ENCODE measurements at regions of chr7 and their contacts with region 1.

Region 1: DNA sequence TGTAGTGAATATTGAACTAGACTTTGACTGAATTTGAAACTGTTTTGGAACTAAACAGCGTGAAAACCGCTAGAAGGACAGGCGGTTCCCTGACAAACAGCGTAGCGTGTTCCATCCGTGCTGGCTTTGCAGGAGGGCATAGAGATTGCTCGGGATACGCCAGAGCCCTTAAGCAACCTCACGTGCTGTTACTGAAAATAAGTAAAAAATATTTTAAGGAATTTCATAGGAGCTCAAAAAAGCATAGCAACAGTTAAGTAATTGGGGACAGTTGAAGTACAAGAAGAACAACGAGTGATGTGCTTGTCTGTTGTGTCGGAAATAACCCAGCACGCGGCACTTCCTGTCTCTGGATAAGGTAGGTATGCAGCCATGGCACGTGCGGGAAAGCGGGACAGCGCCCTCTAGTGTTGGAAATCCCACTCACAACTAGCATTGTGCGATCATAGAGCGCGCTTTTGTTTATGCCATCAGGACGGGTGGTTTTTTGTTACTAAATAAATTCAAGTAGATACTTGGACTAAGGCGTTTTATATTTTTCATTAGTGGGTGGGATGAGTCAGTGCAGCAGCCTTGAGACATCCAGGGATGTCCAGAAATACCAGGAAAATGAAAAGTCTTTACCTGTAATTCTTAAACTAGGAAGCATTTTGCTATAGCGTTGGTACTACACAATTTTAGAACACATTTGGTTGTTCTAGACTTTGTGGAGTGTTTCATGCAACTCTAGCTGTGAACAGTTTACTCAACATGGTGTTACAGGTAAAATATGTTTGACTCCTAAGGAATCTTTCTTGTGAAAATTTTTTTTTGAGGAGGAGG is 50.4 kb downstream of the DNAJB6 start:
- DNase-seq: peak; percentile 98
- H3K4me3 ChIP-seq: no peak overlapping the region
- H3K27ac ChIP-seq: peak overlapping the region; percentile 50 to 71 (median 58)
- H3K4me1 ChIP-seq: peaks cover 12 to 35% (median 31%) of the 10 kb centered on the region in 4 donors
- H3K27me3 ChIP-seq: no peaks in the 10 kb centered on the region
- CTCF ChIP-seq: peak; percentile 84 to 92 (median 88)
- EP300 ChIP-seq: peak; percentile 56
- POLR2A ChIP-seq: no peak

Region 2: DNA sequence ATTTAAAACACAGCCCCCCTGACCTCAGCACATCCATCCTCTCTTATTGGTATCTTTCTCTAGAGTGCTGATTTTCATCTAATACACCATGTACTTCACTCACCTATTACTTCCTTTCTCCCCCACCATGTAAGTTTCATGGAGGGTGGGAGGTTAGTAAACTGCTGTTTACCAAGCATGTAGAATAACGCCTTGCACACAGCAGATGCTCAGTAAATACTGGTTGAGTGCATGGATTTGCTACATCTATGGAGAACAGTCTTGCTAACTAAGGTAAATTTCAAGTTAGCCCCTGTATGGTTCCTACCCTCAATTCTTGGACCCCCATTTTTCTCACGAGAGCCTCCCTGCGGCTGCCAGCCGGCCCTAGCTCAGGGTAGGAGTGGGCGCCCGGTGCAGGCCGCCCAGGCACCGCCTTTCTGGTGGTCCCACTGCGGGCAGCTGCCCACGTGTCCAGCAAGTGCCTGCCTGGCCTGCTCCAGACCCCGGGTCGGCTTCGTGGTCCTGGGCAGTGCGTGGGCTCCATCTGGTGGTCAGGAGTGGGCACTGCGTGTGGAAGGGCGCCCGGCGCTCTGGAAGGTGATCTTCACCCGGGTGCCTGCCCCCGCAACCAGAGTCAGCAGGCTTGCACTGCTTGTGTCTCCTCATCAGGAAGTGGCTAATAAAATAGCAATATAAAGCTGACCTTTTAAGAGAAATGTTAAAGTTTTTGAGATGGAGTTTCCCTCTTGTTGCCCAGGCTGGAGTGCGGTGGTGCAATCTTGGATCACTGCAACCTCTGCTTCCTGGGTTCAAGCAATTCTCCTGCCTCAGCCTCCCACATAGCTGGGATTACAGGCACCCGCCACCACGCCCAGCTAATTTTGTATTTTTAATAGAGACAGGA is 113.7 kb before region 1 on chr7:
- intact Hi-C with region 1: loop called (anchors 5 kb)
- DNase-seq: no peak
- H3K4me3 ChIP-seq: no peak overlapping the region
- H3K27ac ChIP-seq: peak overlapping the region; percentile 70 to 85 (median 79)
- H3K4me1 ChIP-seq: peaks cover 18 to 41% (median 31%) of the 10 kb centered on the region in 4 donors
- H3K27me3 ChIP-seq: peaks cover 0 to 13% (median 0%) of the 10 kb centered on the region in 4 donors
- CTCF ChIP-seq: peak; percentile 97 to 100 (median 97)
- EP300 ChIP-seq: no peak
- POLR2A ChIP-seq: no peak

Region 3: GRCh38 chr7:157309990-157310668 is 77.1 kb before region 1 on chr7:
- intact Hi-C with region 1: no loop called
- DNase-seq: no peak
- H3K4me3 ChIP-seq: no peak overlapping the region
- H3K27ac ChIP-seq: peak overlapping the region in 1 of 4 donors; percentile 12
- H3K4me1 ChIP-seq: peaks cover 0 to 8% (median 4%) of the 10 kb centered on the region in 4 donors
- H3K27me3 ChIP-seq: peaks cover 0 to 4% (median 0%) of the 10 kb centered on the region in 4 donors
- CTCF ChIP-seq: no peak
- EP300 ChIP-seq: no peak
- POLR2A ChIP-seq: no peak

Region 4: GRCh38 chr7:157336383-157337315 is 50.5 kb before region 1 on chr7 and contains the start of gene DNAJB6:
- intact Hi-C with region 1: loop called (anchors 5 kb)
- DNase-seq: peak; percentile 99
- H3K4me3 ChIP-seq: peak within 1 kb of the TSS; percentile 82 to 93 (median 88)
- H3K27ac ChIP-seq: peak within 1 kb of the TSS; percentile 97 to 99 (median 98)
- H3K4me1 ChIP-seq: peaks cover 27 to 51% (median 45%) of the 10 kb centered on the region in 4 donors
- H3K27me3 ChIP-seq: no peaks in the 10 kb centered on the region
- CTCF ChIP-seq: no peak
- EP300 ChIP-seq: no peak
- POLR2A ChIP-seq: peak; percentile 93
- total RNA-seq, gene DNAJB6: 103 to 151 (median 139) TPM

Region 5: GRCh38 chr7:157568770-157569584 is 181.8 kb after region 1 on chr7:
- intact Hi-C with region 1: no loop called
- DNase-seq: no peak
- H3K4me3 ChIP-seq: peak overlapping the region; percentile 56 to 66 (median 62)
- H3K27ac ChIP-seq: peak overlapping the region; percentile 29 to 59 (median 38)
- H3K4me1 ChIP-seq: peaks cover 3 to 20% (median 18%) of the 10 kb centered on the region in 4 donors
- H3K27me3 ChIP-seq: no peaks in the 10 kb centered on the region
- CTCF ChIP-seq: no peak
- EP300 ChIP-seq: no peak
- POLR2A ChIP-seq: no peak